ENCODE measurements at regions of chr1 and their contacts with region 1.

Region 1: DNA sequence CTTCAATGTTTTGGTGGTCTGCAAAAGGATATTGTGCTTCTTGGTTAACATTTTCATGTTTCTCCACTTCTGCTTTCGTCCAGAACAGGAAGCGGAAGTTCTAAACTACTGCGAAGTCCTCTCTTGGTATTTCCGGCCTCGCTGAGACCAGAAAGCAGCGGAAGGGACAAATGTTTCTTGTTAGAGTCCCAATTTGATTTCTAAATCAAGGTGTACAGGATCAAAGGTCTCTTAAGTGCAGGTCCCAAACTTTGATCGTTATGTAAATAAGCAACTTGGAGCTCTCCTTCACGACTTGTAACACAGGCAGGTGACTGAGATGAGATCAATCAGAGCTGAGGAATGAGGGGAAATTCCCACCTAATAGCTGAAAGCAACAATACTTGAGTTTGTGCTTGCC is 40.1 kb upstream of the HMCN1 start:
- DNase-seq: peak; percentile 73
- H3K4me3 ChIP-seq: no peak overlapping the region
- H3K27ac ChIP-seq: peak overlapping the region; percentile 100
- H3K4me1 ChIP-seq: peaks cover 61% of the 10 kb centered on the region
- H3K27me3 ChIP-seq: no peaks in the 10 kb centered on the region
- CTCF ChIP-seq: no peak

Region 2: DNA sequence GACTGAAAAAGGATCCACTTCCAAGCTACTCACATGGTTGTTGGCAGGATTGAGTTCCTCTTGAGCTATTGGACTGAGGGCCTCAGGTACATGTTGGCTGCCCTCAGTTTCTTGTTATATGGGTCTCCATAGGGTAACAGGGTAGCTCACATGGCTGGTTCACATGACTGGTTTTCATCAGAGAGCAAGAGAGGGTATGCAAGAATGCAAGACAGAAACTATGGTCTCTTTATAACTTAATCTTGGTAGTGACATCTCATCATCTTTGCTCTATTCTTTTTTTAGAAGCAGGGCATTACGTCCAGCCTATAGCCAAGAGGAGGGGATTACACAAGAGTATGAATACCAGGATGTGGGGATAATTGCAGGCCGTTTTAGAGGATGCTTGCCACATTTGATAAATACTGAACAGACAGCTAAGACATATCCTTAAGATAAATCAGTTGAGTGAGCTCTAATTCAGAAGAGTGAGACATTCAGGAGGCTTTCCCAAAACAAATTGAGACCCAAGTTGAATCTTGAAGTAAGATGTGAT is 140.4 kb after region 1 on chr1:
- CTCF ChIA-PET with region 1: no interaction called
- POLR2A ChIA-PET with region 1: interaction called, 34 read pairs
- intact Hi-C with region 1: no loop called
- DNase-seq: peak; percentile 84
- H3K4me3 ChIP-seq: no peak overlapping the region
- H3K27ac ChIP-seq: peak overlapping the region; percentile 61
- H3K4me1 ChIP-seq: peaks cover 63% of the 10 kb centered on the region
- H3K27me3 ChIP-seq: no peaks in the 10 kb centered on the region
- CTCF ChIP-seq: no peak